Keratinocyte (primary cell): ENCODE measurements at regions of chr17 and their contacts with region 1.

Region 1: DNA sequence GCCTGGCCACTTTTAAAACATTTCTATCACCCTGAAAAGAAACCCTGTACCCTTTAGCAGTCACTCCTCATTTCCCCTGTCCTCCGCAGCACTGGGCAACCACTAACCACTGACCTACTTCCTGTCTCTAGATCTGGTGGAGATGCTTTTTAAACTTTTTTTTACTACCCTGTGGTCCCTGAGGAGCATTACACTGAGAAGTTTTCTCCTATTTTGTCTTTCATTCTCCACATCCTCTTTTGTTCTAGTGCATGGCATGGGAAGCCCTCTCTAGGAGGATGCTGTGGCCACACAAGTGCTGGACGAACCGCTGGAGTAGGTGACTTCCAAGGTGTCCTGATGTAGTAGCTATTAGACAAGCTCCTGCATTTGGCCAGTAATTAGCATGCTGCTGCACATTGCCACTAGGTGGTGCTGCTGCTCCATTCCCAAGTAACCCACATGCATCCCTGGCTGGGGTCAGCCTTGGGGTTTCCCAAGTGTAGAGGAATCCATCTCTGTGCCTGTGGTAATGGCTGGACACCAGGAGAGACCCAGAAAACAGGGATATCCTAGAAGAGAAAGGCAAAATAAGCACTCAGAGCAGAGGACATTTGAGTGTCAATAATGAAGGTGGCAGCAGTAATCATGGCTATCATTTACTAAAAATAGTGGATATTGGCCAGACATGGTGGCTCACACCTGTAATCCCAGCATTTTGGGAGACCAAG is 143.8 kb upstream of the CRHR1 start:
- DNase-seq: peak; percentile 26
- H3K4me3 ChIP-seq: no peak overlapping the region
- H3K27ac ChIP-seq: no peak overlapping the region
- H3K4me1 ChIP-seq: no peaks in the 10 kb centered on the region
- H3K27me3 ChIP-seq: no peaks in the 10 kb centered on the region
- CTCF ChIP-seq: peak; percentile 97 to 99 (median 97)

Region 2: GRCh38 chr17:45302649-45303173 is 337.6 kb before region 1 on chr17:
- dilution Hi-C with region 1: no loop called
- DNase-seq: no peak
- H3K4me3 ChIP-seq: peak overlapping the region in 1 of 3 experiments; percentile 7
- H3K27ac ChIP-seq: peak overlapping the region; percentile 55
- H3K4me1 ChIP-seq: peaks cover 52% of the 10 kb centered on the region
- H3K27me3 ChIP-seq: no peaks in the 10 kb centered on the region
- CTCF ChIP-seq: no peak

Region 3: DNA sequence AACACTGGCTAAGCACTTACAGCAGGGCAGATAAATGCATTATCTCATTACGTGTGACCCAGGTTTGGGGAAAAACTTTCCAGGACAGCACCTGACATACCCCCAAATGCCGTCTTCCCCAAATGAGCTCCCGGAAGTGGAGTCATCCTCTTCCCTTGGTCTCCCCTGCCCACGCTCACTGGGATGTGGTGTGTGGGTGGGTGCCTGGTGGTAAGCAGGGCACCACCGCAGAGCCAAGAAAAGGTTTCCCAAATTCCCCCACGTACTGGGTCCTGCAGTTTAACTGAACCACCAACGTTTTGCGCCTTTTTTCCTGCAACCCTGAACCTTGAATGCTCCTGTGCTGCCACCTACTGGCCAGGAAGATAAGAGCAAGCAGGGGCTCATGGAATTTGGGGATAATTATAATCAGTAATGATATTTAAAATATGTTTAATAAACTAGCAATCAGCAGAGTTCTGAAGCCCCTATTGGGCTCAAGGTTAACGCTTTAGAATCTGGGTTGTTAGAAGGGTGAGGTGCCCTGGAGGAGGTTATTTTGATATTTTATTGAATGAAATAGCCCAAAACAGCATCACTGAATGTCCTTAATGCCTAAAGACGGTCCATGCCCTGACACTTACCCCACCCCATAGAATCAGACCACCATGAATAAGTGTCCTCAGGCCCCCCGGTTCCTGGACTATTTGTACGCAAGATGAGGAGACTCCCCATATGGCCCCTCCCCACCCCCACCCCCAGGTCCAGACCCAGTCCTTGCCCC is 212.4 kb after region 1 on chr17:
- dilution Hi-C with region 1: loop called (anchors 25 kb)
- DNase-seq: no peak
- H3K4me3 ChIP-seq: no peak overlapping the region
- H3K27ac ChIP-seq: no peak overlapping the region
- H3K4me1 ChIP-seq: no peaks in the 10 kb centered on the region
- H3K27me3 ChIP-seq: no peaks in the 10 kb centered on the region
- CTCF ChIP-seq: peak; percentile 76 to 88 (median 77)